CD8-positive, alpha-beta T cell (primary cell): ENCODE measurements at regions of chr19 and their contacts with region 1.

Region 1: GRCh38 chr19:7488736-7489353 is at the start of gene PEX11G:
- DNase-seq: peak; percentile 81 to 95 (median 90)
- ATAC-seq: peak; percentile 96
- H3K4me3 ChIP-seq: peak within 1 kb of the TSS; percentile 70 to 78
- H3K4me3 Mint-ChIP-seq: peak within 1 kb of the TSS; percentile 92
- H3K27ac ChIP-seq: peak within 1 kb of the TSS; percentile 68 to 77
- H3K27ac Mint-ChIP-seq: peak within 1 kb of the TSS; percentile 94
- H3K4me1 ChIP-seq: peaks cover 9% of the 10 kb centered on the region
- H3K4me1 Mint-ChIP-seq: peaks cover 6% of the 10 kb centered on the region
- H3K27me3 ChIP-seq: no peaks in the 10 kb centered on the region
- H3K27me3 Mint-ChIP-seq: no peaks in the 10 kb centered on the region
- CTCF ChIP-seq: no peak
- total RNA-seq, gene PEX11G: not detected

Region 2: GRCh38 chr19:7394731-7395359 is 94.0 kb before region 1 on chr19:
- CTCF ChIA-PET with region 1: no interaction called
- POLR2A ChIA-PET with region 1: no interaction called
- intact Hi-C with region 1: loop called in 1 of 2 experiments (anchors 1 kb)
- DNase-seq: peak; percentile 79 to 97 (median 89)
- ATAC-seq: peak; percentile 90
- H3K4me3 ChIP-seq: peak overlapping the region; percentile 39 to 65
- H3K4me3 Mint-ChIP-seq: peak overlapping the region; percentile 86
- H3K27ac ChIP-seq: peak overlapping the region; percentile 12 to 72
- H3K27ac Mint-ChIP-seq: peak overlapping the region; percentile 87
- H3K4me1 ChIP-seq: peaks cover 26% of the 10 kb centered on the region
- H3K4me1 Mint-ChIP-seq: peaks cover 41% of the 10 kb centered on the region
- H3K27me3 ChIP-seq: no peaks in the 10 kb centered on the region
- H3K27me3 Mint-ChIP-seq: no peaks in the 10 kb centered on the region
- CTCF ChIP-seq: no peak

Region 3: DNA sequence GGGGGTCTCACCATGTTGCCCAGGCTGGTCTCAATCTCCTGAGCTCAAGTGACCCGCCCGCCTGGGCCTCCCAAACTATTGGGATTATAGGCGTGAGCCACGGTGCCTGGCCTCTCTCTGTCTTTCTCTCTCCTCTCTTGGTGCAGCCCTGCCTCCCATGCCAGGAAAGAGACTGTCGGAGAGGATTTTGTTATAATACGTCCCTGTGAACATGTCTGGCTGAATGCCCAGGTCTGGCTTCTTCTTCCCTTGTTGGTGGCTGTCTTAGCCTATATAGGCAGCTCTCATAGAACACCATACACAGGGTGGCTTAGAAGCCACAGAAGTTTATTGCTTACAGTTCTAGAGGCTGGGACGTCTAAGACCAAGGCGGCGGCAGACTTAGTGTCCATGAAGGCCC is 46.4 kb before region 1 on chr19:
- CTCF ChIA-PET with region 1: no interaction called
- POLR2A ChIA-PET with region 1: no interaction called
- intact Hi-C with region 1: no loop called
- DNase-seq: no peak
- ATAC-seq: no peak
- H3K4me3 ChIP-seq: no peak overlapping the region
- H3K4me3 Mint-ChIP-seq: no peak overlapping the region
- H3K27ac ChIP-seq: no peak overlapping the region
- H3K27ac Mint-ChIP-seq: no peak overlapping the region
- H3K4me1 ChIP-seq: no peaks in the 10 kb centered on the region
- H3K4me1 Mint-ChIP-seq: no peaks in the 10 kb centered on the region
- H3K27me3 ChIP-seq: no peaks in the 10 kb centered on the region
- H3K27me3 Mint-ChIP-seq: no peaks in the 10 kb centered on the region
- CTCF ChIP-seq: no peak

Region 4: DNA sequence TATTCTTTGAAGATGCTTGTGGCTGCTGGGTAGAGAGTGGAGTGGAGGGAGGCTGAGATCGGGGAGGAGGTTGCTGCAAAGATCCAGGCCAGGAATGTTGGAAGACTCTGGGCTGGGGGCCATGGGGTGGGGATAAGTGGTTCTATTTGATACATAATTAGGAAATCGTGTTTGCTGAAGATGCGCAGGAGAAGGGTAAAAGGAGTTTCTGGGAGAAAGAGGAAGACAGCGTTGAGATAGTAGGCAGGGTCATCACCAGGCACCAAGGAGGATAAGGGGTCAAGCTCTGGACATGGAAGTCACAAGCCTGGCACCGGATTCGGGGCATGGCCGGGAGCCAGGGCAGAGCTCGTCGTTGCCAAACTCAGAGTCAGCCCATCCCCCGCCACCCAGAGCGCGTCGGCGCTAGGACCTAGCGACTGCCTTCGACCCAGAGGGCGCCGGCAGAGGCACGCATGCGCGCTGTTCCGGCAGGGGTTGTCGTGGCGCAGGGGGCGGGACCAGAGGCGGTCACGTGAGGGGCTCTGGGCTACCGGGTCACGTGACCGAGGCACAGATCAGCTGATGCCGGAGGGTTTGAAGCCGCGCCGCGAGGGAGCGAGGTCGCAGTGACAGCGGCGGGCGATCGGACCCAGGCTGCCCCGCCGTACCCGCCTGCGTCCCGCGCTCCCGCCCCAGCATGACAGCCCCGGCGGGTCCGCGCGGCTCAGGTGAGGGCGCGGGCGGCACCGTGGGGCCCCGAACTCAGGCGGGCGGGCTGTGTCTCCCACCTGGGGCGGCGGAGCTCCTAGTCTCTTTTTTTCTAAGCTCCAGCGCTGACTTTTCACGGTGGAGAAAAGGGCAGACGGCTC is 33.5 kb after region 1 on chr19 and contains the start of gene MCOLN1:
- CTCF ChIA-PET with region 1: no interaction called
- POLR2A ChIA-PET with region 1: interaction called, 4 read pairs
- intact Hi-C with region 1: loop called (anchors 1 kb)
- DNase-seq: peak; percentile 98 to 100 (median 100)
- ATAC-seq: peak; percentile 93
- H3K4me3 ChIP-seq: peak within 1 kb of the TSS; percentile 66 to 80
- H3K4me3 Mint-ChIP-seq: peak within 1 kb of the TSS; percentile 85
- H3K27ac ChIP-seq: peak within 1 kb of the TSS in 1 of 2 experiments; percentile 17
- H3K27ac Mint-ChIP-seq: peak within 1 kb of the TSS; percentile 85
- H3K4me1 ChIP-seq: peaks cover 16% of the 10 kb centered on the region
- H3K4me1 Mint-ChIP-seq: peaks cover 15% of the 10 kb centered on the region
- H3K27me3 ChIP-seq: no peaks in the 10 kb centered on the region
- H3K27me3 Mint-ChIP-seq: no peaks in the 10 kb centered on the region
- CTCF ChIP-seq: no peak
- total RNA-seq, gene MCOLN1: 9.0 to 13.3 TPM

Region 5: GRCh38 chr19:7629347-7630054 is 140.7 kb after region 1 on chr19 and contains the starts of genes PET100 and XAB2:
- CTCF ChIA-PET with region 1: no interaction called
- POLR2A ChIA-PET with region 1: interaction called, 4 read pairs
- intact Hi-C with region 1: loop called in 1 of 2 experiments (anchors 1 kb)
- DNase-seq: peak; percentile 90 to 99 (median 94)
- ATAC-seq: peak; percentile 94
- H3K4me3 ChIP-seq: peak within 1 kb of the TSS; percentile 98 to 100
- H3K4me3 Mint-ChIP-seq: peak within 1 kb of the TSS; percentile 97
- H3K27ac ChIP-seq: peak within 1 kb of the TSS; percentile 92 to 99
- H3K27ac Mint-ChIP-seq: peak within 1 kb of the TSS; percentile 99
- H3K4me1 ChIP-seq: peaks cover 27% of the 10 kb centered on the region
- H3K4me1 Mint-ChIP-seq: peaks cover 36% of the 10 kb centered on the region
- H3K27me3 ChIP-seq: no peaks in the 10 kb centered on the region
- H3K27me3 Mint-ChIP-seq: no peaks in the 10 kb centered on the region
- CTCF ChIP-seq: no peak
- total RNA-seq, gene PET100: 186 to 188 TPM
- total RNA-seq, gene XAB2: 127 to 133 TPM